ENCODE measurements at regions of chr10 and their contacts with region 1.

Region 1: DNA sequence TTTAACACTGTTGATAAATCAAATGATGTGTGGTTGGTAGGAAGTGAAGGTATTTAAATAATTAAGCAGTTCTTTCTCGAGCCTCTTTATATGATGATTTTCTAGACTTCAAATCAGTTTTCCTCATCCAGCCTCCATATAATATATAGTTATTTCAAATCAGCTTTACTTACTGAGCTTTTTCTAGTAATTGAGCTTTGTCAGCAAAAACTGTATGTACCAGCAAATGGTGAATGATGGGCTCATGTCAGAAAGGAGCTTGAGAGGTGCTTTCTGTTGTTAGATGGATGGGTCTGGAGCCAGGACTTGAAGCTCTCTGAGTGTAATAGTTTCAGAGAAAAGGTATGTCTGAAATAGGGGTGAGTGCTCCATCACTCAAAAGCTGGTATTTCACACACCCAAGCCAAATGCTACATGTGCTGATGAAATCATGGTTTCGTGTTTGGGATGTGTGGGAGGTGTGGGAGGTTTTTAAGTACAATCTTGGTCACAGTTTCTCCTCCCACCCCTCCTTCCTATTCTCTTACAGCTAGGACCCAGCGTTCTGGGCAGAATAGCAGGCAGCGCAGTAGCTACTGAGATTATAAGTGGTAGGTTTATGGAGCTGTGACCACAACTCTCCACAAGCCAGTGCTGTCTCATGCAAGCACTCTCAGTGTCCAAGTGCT is 55.8 kb downstream of the LRMDA start:
- DNase-seq: peak; percentile 19
- ATAC-seq: peak; percentile 92
- H3K4me3 ChIP-seq: no peak overlapping the region
- H3K27ac ChIP-seq: no peak overlapping the region
- H3K4me1 ChIP-seq: no peaks in the 10 kb centered on the region
- H3K27me3 ChIP-seq: no peaks in the 10 kb centered on the region
- CTCF ChIP-seq: no peak
- EP300 ChIP-seq: 0 out of 4 replicates have a peak, but pooled peaks of 1 of the 2 experiments have one; percentile 57
- POLR2A ChIP-seq: no peak
- RAD21 ChIP-seq: no peak

Region 2: GRCh38 chr10:75431180-75432111 is 55.8 kb before region 1 on chr10 and contains the start of gene LRMDA:
- CTCF ChIA-PET with region 1: interaction called, 3 read pairs
- POLR2A ChIA-PET with region 1: interaction called, 5 read pairs
- RAD21 ChIA-PET with region 1: interaction called, 13 read pairs
- SMC1A ChIA-PET with region 1: interaction called, 16 read pairs
- in situ Hi-C with region 1: no loop called
- intact Hi-C with region 1: no loop called
- DNase-seq: no peak
- ATAC-seq: peak; percentile 64
- H3K4me3 ChIP-seq: no peak within 1 kb of the TSS
- H3K27ac ChIP-seq: no peak within 1 kb of the TSS
- H3K4me1 ChIP-seq: no peaks in the 10 kb centered on the region
- H3K27me3 ChIP-seq: peaks cover 0 to 12% of the 10 kb centered on the region in 2 experiments; a peak in 2 of 4 replicates
- CTCF ChIP-seq: no peak
- EP300 ChIP-seq: no peak
- POLR2A ChIP-seq: no peak
- RAD21 ChIP-seq: no peak
- polyA plus RNA-seq, gene LRMDA: 0.07 TPM in 1 of 2 experiments, not detected in the other

Region 3: DNA sequence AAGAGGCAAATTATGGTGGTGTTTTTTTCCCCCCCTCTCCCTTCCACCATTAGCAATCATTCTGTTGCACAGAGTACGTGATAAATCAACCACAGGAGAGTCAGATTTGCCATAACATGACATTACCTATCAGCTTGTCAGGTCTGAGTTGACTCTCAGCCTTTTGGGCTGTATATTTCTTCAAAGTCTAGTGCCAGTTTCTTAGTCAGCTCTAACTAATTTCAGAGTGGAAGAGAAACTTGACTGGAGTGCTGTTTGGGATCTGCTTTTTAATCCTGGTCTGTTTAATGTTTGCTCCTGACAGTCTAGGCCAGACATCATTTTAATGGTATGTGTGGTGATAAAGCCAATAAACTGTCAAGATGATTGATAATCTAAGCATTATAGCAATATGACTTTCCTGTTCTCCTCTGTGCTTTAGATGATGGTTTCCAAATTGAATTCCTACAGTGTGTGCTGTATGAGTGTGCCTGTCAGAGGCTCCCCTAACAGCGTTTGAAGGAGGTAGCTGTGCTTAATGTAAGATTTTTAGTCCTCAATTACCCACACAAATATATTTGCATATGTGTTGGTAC is 21.1 kb after region 1 on chr10:
- CTCF ChIA-PET with region 1: interaction called, 5 read pairs
- POLR2A ChIA-PET with region 1: interaction called, 3 read pairs
- RAD21 ChIA-PET with region 1: interaction called, 10 read pairs
- SMC1A ChIA-PET with region 1: interaction called, 20 read pairs
- in situ Hi-C with region 1: no loop called
- intact Hi-C with region 1: no loop called
- DNase-seq: no peak
- ATAC-seq: no peak
- H3K4me3 ChIP-seq: no peak overlapping the region
- H3K27ac ChIP-seq: no peak overlapping the region
- H3K4me1 ChIP-seq: peaks cover 12% of the 10 kb centered on the region
- H3K27me3 ChIP-seq: peaks cover 0 to 2% of the 10 kb centered on the region in 2 experiments; a peak in 1 of 4 replicates
- CTCF ChIP-seq: no peak
- EP300 ChIP-seq: no peak
- POLR2A ChIP-seq: no peak
- RAD21 ChIP-seq: no peak

Region 4: GRCh38 chr10:75540357-75540966 is 53.2 kb after region 1 on chr10:
- CTCF ChIA-PET with region 1: interaction called, 6 read pairs
- POLR2A ChIA-PET with region 1: interaction called, 5 read pairs
- RAD21 ChIA-PET with region 1: interaction called, 3 read pairs
- SMC1A ChIA-PET with region 1: interaction called, 10 read pairs
- in situ Hi-C with region 1: no loop called
- intact Hi-C with region 1: no loop called
- DNase-seq: no peak
- ATAC-seq: peak; percentile 86
- H3K4me3 ChIP-seq: no peak overlapping the region
- H3K27ac ChIP-seq: no peak overlapping the region
- H3K4me1 ChIP-seq: no peaks in the 10 kb centered on the region; the same call in 1 of the 2 replicates
- H3K27me3 ChIP-seq: no peaks in the 10 kb centered on the region; a peak in 1 of 4 replicates
- CTCF ChIP-seq: peak; percentile 1 to 17 (median 5); a peak in 1 of 6 replicates
- EP300 ChIP-seq: no peak
- POLR2A ChIP-seq: no peak
- RAD21 ChIP-seq: no peak

Region 5: DNA sequence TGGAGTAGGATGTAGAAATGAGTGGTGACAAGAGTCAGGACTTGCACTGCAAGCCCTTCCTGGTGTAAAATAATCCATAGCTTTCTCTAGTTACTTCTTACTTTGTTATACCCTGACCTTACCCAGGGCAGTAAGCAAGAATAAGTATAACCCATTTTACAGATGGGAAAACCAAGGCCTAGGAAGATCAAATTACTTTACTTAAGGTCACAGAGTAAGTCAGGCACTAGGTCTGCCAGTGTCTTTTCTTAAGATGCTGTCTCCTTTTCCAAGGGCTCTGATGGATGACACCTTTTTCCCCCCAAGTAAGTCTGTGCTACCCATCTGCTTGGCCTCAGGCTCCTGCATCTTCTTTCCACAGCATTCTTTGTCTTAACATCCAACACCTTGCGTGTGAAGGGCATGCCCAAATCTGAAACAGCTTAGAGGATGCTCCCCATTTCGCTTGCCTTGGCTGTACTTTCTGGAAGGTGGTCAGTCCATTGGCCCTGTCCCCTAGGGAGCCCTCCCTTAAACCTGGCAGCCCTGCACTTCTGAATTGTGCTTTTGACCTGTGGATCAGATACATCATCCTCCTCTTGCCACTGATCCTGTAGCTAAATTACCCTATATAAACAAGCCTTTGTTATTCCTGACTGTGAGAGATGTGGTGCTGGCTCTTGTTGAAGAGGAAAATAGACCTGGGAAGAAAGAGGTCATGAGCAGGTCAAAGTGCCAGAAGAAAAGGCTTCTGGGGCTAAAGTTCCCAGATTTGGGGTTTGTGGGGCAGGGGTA is 112.8 kb after region 1 on chr10:
- CTCF ChIA-PET with region 1: no interaction called
- POLR2A ChIA-PET with region 1: no interaction called
- RAD21 ChIA-PET with region 1: interaction called, 3 read pairs
- SMC1A ChIA-PET with region 1: interaction called, 10 read pairs
- in situ Hi-C with region 1: no loop called
- intact Hi-C with region 1: no loop called
- DNase-seq: no peak
- ATAC-seq: no peak
- H3K4me3 ChIP-seq: no peak overlapping the region
- H3K27ac ChIP-seq: no peak overlapping the region
- H3K4me1 ChIP-seq: no peaks in the 10 kb centered on the region
- H3K27me3 ChIP-seq: no peaks in the 10 kb centered on the region
- CTCF ChIP-seq: no peak
- EP300 ChIP-seq: no peak
- POLR2A ChIP-seq: no peak
- RAD21 ChIP-seq: no peak

Region 6: DNA sequence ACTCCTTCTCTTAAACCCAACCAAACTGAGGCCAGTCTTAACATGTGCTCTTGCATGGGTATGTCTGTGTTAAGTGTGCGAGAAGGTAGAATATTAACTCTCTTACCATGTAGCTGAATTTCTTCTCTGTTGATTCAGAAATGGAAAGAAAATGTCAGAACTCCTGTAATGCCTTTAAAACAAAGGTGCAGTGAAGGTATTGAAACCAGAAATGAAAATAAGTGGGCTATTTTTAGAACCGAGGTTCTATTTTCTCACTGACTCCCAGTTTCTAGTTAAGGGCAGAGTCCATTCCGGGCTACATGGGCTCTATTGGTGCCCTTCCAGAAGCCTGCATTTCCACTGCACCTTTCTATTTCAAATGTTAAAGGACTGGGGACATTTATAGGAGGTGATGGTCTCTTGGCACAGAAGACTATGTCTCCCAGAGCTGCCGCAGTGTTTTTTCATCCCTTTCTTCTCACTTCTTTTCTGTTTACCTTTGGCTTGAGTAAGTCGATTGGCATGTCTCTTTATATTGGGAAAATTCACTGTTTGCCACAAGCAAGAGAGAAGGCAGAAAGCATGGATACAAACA is 119.1 kb after region 1 on chr10:
- CTCF ChIA-PET with region 1: no interaction called
- POLR2A ChIA-PET with region 1: no interaction called
- RAD21 ChIA-PET with region 1: interaction called, 12 read pairs
- SMC1A ChIA-PET with region 1: interaction called, 10 read pairs
- in situ Hi-C with region 1: no loop called
- intact Hi-C with region 1: no loop called
- DNase-seq: peak; percentile 64
- ATAC-seq: peak; percentile 81
- H3K4me3 ChIP-seq: no peak overlapping the region; the same call in 1 of the 2 replicates
- H3K27ac ChIP-seq: peak overlapping the region; percentile 36
- H3K4me1 ChIP-seq: peaks cover 4% of the 10 kb centered on the region
- H3K27me3 ChIP-seq: no peaks in the 10 kb centered on the region
- CTCF ChIP-seq: no peak
- EP300 ChIP-seq: peak; percentile 62 to 70; a peak in 2 of 4 replicates
- POLR2A ChIP-seq: no peak
- RAD21 ChIP-seq: no peak

Region 7: DNA sequence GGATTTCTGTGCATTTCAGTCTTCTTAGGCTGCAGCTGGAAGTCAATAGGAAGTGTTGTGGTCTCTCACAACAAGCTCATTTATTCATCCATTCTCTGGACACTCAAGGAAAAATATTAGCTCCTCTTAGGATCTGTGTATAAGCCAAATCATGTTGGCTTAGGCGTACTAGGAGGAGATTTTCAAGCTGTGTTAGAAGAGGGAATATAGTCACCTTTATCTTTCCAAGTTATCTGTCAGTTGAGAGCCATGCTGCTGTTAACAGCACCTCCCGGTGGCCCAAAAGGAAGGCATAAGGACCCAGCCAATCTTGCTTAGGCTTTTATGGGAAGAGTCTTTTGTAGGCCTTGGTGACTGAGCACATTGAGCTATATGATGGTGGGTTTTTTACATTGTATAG is 164.2 kb after region 1 on chr10:
- CTCF ChIA-PET with region 1: interaction called, 3 read pairs
- POLR2A ChIA-PET with region 1: no interaction called
- RAD21 ChIA-PET with region 1: interaction called, 10 read pairs
- SMC1A ChIA-PET with region 1: interaction called, 4 read pairs
- in situ Hi-C with region 1: no loop called
- intact Hi-C with region 1: no loop called
- DNase-seq: no peak
- ATAC-seq: no peak
- H3K4me3 ChIP-seq: no peak overlapping the region
- H3K27ac ChIP-seq: no peak overlapping the region
- H3K4me1 ChIP-seq: no peaks in the 10 kb centered on the region
- H3K27me3 ChIP-seq: no peaks in the 10 kb centered on the region; a peak in 1 of 4 replicates
- CTCF ChIP-seq: peak in 2 of 3 experiments; percentile 7 to 30; a peak in 2 of 6 replicates
- EP300 ChIP-seq: no peak
- POLR2A ChIP-seq: no peak
- RAD21 ChIP-seq: peak; percentile 21; the same call in 1 of the 2 replicates